IMR-90 (cell line): ENCODE measurements at regions of chr7 and their contacts with region 1.

Region 1: DNA sequence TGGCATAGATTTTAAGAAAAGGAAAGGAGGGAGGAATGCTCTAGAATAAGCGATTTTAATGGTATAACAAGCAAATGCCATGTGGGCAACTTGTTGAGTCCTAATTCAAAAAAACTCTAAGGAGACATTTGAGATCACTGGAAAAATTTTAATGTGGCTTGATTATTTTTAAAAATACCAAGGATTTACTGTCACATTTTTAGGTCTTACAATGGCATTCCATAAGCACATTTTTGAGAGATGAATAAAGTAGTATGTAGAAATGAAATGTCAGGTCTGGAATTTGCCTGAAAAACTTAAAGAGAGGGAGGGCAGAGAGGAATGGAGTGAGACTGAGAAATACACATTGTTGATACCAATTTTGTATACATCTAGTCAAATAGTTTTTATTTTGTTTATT is 20.3 kb downstream of the NCAPG2 start:
- DNase-seq: peak; percentile 36
- ATAC-seq: peak; percentile 78
- H3K4me3 ChIP-seq: no peak overlapping the region
- H3K27ac ChIP-seq: peak overlapping the region; percentile 92; the same call in 1 of the 2 replicates
- H3K4me1 ChIP-seq: peaks cover 14% of the 10 kb centered on the region
- H3K27me3 ChIP-seq: no peaks in the 10 kb centered on the region
- CTCF ChIP-seq: no peak
- POLR2A ChIP-seq: no peak
- RAD21 ChIP-seq: no peak

Region 2: DNA sequence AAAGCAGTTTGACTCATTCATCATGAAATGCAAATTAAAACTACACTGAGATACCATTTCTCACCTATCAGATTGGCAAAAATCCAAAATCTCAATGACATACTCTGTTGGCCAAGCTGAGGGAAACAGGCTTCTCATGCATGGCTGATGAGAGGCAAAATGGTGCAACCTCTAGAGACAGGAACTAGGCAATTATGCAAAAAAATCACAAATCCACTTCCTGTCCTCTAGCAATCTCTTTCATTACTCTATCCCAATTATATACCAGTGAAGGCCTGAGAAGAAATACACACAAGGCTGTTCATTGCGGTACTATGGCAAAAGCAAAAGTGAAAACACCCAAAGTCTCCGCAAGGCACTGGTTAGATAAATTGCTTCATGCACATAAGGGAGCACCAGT is 70.8 kb before region 1 on chr7:
- CTCF ChIA-PET with region 1: no interaction called
- POLR2A ChIA-PET with region 1: no interaction called
- dilution Hi-C with region 1: no loop called
- in situ Hi-C with region 1: no loop called
- intact Hi-C with region 1: loop called (anchors 5 kb)
- DNase-seq: no peak
- ATAC-seq: no peak
- H3K4me3 ChIP-seq: no peak overlapping the region
- H3K27ac ChIP-seq: no peak overlapping the region
- H3K4me1 ChIP-seq: peaks cover 5% of the 10 kb centered on the region
- H3K27me3 ChIP-seq: no peaks in the 10 kb centered on the region
- CTCF ChIP-seq: no peak
- POLR2A ChIP-seq: no peak
- RAD21 ChIP-seq: no peak